Activated T-helper 1 cell treated with anti-CD3 and anti-CD28 coated beads, Interleukin-12 subunit alpha, Interleukin-12 subunit beta, Interleukin-2, Interleukin-4 antibody, amounts not matched to agents 30 ng/mL and 10 ng/mL and 1 ng/mL, durations not matched to agents 14 hours and 24 hours and 36 hours (primary cell): ENCODE measurements at regions of chr1 and their contacts with region 1.

Region 1: GRCh38 chr1:209755926-209756614 is at the start of gene TRAF3IP3:
- DNase-seq: peak; percentile 74
- H3K4me3 Mint-ChIP-seq: peak within 1 kb of the TSS; percentile 99
- H3K27ac Mint-ChIP-seq: peak within 1 kb of the TSS; percentile 98
- H3K4me1 Mint-ChIP-seq: peaks cover 80% of the 10 kb centered on the region
- H3K27me3 Mint-ChIP-seq: no peaks in the 10 kb centered on the region
- total RNA-seq, gene TRAF3IP3: 378 and 384 TPM in 2 replicates

Region 2: GRCh38 chr1:209743145-209743482 is 13.0 kb before region 1 on chr1:
- intact Hi-C with region 1: no loop called
- DNase-seq: no peak
- H3K4me3 Mint-ChIP-seq: no peak overlapping the region
- H3K27ac Mint-ChIP-seq: peak overlapping the region; percentile 68
- H3K4me1 Mint-ChIP-seq: peaks cover 51% of the 10 kb centered on the region
- H3K27me3 Mint-ChIP-seq: no peaks in the 10 kb centered on the region

Region 3: DNA sequence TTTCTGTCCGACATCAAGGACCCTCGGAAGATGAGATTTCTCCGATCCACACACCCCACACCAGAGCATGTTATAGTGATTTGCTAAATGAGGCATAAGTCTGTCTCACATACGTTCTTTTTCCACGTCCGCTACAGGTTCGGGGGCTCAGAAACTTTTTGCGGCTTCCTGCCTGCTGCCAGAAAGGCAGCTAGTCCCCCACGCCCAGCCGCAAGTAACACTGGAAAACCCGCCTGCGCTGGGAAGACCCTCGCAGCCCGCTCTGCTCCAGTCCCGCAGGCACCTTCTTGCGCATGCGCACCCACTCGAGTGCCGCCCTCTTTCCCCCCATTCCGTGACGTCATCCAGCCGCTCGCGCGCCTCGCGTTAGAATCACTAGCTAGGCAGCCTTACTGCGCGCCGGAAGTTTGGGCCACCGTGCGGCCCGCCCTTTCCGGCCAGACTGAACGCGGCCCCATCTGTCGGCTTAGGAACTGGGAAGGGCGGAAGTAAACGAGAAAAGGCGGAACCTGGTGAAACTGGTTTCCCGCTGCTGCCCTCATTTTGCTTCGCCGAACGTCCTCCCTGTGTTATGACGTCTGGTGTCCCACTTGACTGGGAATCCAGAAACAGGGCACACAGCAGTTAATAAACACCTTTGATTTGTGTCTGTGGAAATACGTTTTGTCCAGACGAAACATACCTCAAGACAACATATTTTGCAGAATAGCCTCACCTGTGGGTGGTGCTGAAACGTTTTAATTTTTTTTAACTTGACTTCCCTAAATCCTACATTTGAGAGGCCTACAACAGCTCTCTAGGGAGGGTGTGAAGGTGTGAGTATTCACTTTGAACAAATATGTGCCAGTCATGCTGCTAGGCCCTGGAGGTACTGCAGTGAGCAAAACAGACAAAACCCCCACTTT is 28.4 kb after region 1 on chr1 and contains the start of gene C1orf74:
- intact Hi-C with region 1: loop called (anchors 1 kb)
- DNase-seq: peak; percentile 100
- H3K4me3 Mint-ChIP-seq: peak within 1 kb of the TSS; percentile 90
- H3K27ac Mint-ChIP-seq: peak within 1 kb of the TSS; percentile 96
- H3K4me1 Mint-ChIP-seq: peaks cover 71% of the 10 kb centered on the region
- H3K27me3 Mint-ChIP-seq: no peaks in the 10 kb centered on the region
- total RNA-seq, gene C1orf74: 2.9 and 3.2 TPM in 2 replicates

Region 4: DNA sequence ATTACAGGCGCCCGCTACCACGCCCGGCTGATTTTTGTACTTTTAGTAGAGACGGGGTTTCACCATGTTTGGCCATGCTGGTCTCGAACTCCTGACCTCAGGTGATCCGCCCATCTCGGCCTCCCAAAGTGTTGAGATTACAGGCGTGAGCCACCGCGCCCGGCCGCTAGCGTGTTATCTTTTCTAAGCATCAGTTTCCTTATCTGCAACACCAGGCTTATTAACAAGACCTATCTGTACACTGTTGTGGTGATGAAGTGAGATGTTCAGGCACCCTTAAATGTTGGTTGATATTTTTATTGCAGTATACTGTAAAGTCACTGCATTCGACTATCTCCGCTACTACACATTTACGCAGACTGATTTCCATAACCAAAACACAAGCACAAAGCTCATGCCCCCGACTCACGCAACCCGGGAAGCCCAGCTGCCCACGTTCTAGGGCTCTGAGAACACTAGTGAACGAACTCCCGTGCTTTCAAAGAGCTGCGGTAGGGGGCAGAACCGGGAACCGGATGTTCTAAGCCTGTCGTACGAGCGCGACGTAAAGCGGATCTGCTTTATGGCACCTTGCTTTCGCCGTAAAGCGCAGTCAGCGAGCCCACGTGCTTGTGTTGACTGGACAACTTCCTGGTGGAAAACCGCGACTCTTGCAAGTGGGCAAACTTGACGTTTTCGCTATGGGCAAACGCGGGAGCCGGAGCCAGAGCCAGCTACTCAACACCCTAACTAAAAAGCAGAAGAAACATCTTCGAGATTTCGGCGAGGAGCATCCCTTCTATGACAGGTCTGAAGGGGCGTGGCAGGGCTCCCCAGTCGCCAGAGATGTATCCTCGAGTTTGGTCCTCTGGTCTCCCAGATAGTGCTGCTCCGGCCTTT is 71.6 kb after region 1 on chr1 and contains the start of gene UTP25:
- intact Hi-C with region 1: loop called (anchors 1 kb)
- DNase-seq: peak; percentile 89
- H3K4me3 Mint-ChIP-seq: peak within 1 kb of the TSS; percentile 93
- H3K27ac Mint-ChIP-seq: peak within 1 kb of the TSS; percentile 90
- H3K4me1 Mint-ChIP-seq: peaks cover 51% of the 10 kb centered on the region
- H3K27me3 Mint-ChIP-seq: peaks cover 9% of the 10 kb centered on the region
- total RNA-seq, gene UTP25: 17.7 and 18.3 TPM in 2 replicates

Region 5: DNA sequence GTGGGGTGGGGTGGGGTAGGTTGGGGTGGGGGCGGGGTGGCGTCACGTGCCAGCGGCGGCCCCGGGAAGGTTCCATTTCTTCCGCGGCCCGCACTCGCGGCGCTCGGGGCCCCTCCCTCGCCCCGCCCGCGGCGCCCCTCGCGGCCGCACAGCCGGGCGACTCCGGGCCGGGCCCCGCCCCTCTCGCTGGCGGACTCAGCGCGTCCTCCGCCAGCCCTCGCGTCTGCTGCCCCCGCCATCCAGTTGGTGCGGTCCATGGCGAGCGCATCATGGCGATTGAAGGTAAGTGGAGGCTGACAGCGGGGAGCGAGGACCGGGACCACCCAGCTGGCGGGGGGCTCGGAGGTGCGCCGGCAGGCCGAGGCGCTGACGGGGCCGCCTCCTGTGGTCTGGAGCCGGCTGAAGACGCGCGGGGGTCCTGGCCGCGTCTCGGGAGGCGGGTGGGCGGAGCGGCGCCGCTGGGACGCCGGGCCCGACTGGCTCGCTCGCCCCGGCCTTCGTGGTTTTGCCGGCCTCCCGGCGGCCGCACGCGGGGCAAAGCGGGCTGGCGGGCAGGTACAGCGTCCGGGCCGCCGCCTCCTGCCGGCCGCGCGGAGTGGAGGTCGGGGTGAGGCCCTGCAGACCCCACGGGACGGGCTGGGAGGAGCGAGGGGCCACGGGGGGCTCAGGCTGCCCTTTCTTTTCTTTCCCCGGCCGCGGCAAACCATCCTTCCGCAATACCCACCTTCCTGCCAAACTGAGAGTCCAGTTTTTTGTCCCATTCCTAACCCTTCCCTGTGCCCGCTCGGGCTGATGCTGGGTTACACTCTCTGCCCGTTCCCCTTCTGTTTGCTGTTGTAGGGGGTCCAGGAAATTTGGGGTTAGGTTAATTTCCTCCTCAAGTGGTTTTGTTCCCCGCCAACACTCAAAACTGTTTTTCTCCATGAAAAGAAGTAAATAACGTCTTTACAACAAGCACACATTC is 182.2 kb after region 1 on chr1 and contains the start of gene SYT14:
- intact Hi-C with region 1: loop called (anchors 1 kb)
- DNase-seq: no peak
- H3K4me3 Mint-ChIP-seq: peak within 1 kb of the TSS; percentile 57
- H3K27ac Mint-ChIP-seq: peak within 1 kb of the TSS; percentile 19
- H3K4me1 Mint-ChIP-seq: peaks cover 12% of the 10 kb centered on the region
- H3K27me3 Mint-ChIP-seq: peaks cover 51% of the 10 kb centered on the region
- total RNA-seq, gene SYT14: not detected in 2 replicates

Region 6: DNA sequence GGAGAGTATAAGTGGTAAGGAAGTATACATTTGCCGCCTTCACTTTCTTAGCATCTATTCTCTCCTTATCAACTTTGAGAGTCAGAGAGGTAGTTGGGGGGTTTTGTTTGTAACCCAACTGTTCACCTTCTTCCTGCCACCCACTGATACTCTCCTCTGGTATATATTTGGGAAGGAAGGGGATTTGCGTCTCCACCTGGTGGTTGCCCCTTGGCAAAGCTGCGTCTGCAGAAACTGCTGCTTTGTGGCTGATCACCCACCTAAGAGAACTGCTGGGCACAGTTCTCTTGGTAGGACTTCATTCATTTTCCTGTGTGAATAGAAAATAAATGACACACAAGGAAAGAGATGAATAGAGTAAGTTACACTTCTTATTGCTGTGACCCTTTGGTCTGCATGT is 268.9 kb after region 1 on chr1:
- intact Hi-C with region 1: no loop called
- DNase-seq: no peak
- H3K4me3 Mint-ChIP-seq: no peak overlapping the region
- H3K27ac Mint-ChIP-seq: no peak overlapping the region
- H3K4me1 Mint-ChIP-seq: no peaks in the 10 kb centered on the region
- H3K27me3 Mint-ChIP-seq: peaks cover 6% of the 10 kb centered on the region

Region 7: GRCh38 chr1:211675230-211676105 is 1919.4 kb after region 1 on chr1 and contains the start of gene NEK2:
- intact Hi-C with region 1: loop called (anchors 5 kb)
- DNase-seq: peak; percentile 87
- H3K4me3 Mint-ChIP-seq: peak within 1 kb of the TSS; percentile 95
- H3K27ac Mint-ChIP-seq: peak within 1 kb of the TSS; percentile 80
- H3K4me1 Mint-ChIP-seq: peaks cover 42% of the 10 kb centered on the region
- H3K27me3 Mint-ChIP-seq: no peaks in the 10 kb centered on the region
- total RNA-seq, gene NEK2: 13.9 and 18.9 TPM in 2 replicates